HepG2 (cell line): ENCODE measurements at regions of chr7 and their contacts with region 1.

Region 1: GRCh38 chr7:85456254-85456653 is 269.4 kb upstream of the SEMA3D start:
- DNase-seq: no peak
- ATAC-seq: 0 out of 3 replicates have a peak, but pooled peaks have one; percentile 47
- H3K4me3 ChIP-seq: no peak overlapping the region
- H3K27ac ChIP-seq: no peak overlapping the region
- H3K4me1 ChIP-seq: no peaks in the 10 kb centered on the region
- H3K27me3 ChIP-seq: no peaks in the 10 kb centered on the region
- CTCF ChIP-seq: peak; percentile 55
- EP300 ChIP-seq: no peak
- POLR2A ChIP-seq: no peak
- RAD21 ChIP-seq: no peak

Region 2: GRCh38 chr7:85186521-85187241 is 269.6 kb before region 1 on chr7 and contains the start of gene SEMA3D:
- CTCF ChIA-PET with region 1: no interaction called
- POLR2A ChIA-PET with region 1: no interaction called
- in situ Hi-C with region 1: no loop called
- intact Hi-C with region 1: loop called (anchors 1 kb)
- DNase-seq: peak; percentile 12
- ATAC-seq: peak; percentile 100
- H3K4me3 ChIP-seq: peak within 1 kb of the TSS in 2 of 3 experiments; percentile 21 to 62; a peak in 2 of 6 replicates
- H3K27ac ChIP-seq: no peak within 1 kb of the TSS
- H3K4me1 ChIP-seq: peaks cover 6% of the 10 kb centered on the region; the same call in 1 of the 2 replicates
- H3K27me3 ChIP-seq: peaks cover 1 to 30% of the 10 kb centered on the region in 2 experiments; a peak in 4 of 5 replicates
- CTCF ChIP-seq: peak; percentile 86
- EP300 ChIP-seq: no peak
- POLR2A ChIP-seq: no peak
- RAD21 ChIP-seq: peak; percentile 72
- total RNA-seq, gene SEMA3D: 0.07 TPM in 1 of 2 replicates, not detected in the other